Heart right ventricle (tissue), 16 donors: ENCODE measurements at regions of chr12 and their contacts with region 1.

Region 1: DNA sequence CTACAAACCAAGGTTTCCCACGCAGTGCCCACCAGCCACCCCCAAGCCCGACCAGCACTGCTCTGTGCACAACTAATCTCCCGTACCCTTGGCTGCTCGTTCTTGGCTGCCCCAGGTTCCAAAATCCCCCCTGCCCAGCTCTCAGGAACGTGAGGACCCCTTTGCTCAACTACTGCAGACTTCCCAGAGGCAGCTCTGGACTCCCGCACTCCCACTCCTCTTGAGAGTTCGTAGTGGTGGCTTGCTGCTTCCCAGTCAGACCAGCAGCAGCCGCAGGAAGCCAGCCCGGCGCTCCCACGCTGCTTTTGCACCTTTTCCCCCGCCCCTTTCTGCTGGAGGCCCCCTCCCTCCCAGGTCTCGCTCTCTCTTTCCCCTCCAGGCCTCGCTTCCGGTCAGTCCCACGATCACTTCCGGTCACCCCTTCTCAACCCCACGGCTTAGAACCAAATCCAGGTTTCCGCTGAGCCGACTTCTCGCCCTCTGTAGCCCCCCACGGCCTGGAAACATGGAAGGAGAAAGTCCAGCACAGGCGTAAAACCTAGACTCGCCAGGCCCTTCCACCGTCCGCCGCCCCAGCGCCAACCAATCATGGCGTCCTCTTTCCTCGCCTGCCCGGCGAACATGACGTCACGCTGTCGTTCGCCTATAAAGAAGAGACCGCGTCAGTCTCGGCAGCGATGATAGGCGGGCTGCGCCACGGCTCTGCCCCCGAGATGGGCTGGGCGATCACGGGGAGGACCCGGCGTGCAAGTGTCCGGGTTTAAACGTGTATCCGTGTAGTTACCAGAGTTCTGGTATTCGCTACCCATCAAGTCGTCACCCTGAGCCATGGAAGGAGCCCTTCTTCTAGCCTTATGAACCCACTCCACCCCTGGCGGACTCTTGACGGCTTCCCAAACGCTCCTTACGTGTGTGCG is at the start of gene TFCP2:
- DNase-seq: peak; percentile 96 to 97
- ATAC-seq: peak; percentile 98 to 100 (median 99)
- H3K4me3 ChIP-seq: peak within 1 kb of the TSS; percentile 64 to 91 (median 76)
- H3K27ac ChIP-seq: peak within 1 kb of the TSS; percentile 89 to 99 (median 96)
- H3K4me1 ChIP-seq: peaks cover 3 to 33% (median 25%) of the 10 kb centered on the region in 9 donors
- H3K27me3 ChIP-seq: no peaks in the 10 kb centered on the region
- CTCF ChIP-seq: peak in 1 of 9 donors; percentile 4
- total RNA-seq, gene TFCP2: 19.3 to 30.9 (median 25.5) TPM

Region 2: GRCh38 chr12:51090705-51091229 is 82.0 kb before region 1 on chr12:
- intact Hi-C with region 1: loop called in 1 of 10 experiments (anchors 5 kb)
- DNase-seq: no peak
- ATAC-seq: no peak
- H3K4me3 ChIP-seq: no peak overlapping the region
- H3K27ac ChIP-seq: no peak overlapping the region
- H3K4me1 ChIP-seq: peaks cover 0 to 3% (median 0%) of the 10 kb centered on the region in 9 donors
- H3K27me3 ChIP-seq: no peaks in the 10 kb centered on the region
- CTCF ChIP-seq: no peak

Region 3: DNA sequence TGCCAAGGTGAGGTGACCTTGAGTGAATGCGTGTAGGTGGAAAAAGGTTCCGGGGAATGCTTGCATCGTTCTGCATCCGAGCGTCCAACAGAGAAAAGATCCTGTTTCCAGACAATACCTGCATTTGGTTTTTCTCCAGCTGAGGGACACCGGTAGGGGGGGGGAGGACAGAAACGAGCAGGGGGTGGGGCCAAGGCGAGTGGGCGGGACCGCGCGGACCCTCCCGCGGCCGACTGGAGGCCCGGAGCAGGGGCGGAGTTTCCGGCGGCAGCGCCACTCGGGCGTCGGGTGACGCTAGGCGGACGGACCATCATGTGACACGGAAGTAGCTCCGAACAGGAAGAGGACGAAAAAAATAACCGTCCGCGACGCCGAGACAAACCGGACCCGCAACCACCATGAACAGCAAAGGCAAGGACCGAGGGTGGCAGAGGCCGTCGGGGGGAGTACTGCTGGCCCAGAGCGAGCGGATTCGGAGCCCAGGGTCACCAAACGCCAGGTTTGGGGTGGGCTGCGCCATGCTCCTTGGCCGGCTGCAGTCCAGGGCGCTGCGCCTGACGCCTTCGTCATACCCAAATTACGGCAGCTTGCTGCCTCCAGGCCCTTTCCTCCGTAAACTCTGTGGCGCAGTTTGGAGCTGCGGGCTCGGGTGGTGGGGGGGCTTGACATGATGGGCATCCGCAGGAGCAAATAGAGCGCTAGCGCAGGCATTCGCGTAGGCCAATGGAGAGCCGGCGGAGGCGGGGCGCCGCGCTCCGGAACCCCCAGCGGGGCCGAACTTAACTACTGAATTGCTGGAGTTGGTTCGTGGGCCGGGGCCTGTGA is 65.9 kb after region 1 on chr12 and contains the start of gene DAZAP2:
- intact Hi-C with region 1: loop called in 3 of 10 experiments (anchors 2 kb)
- DNase-seq: peak; percentile 96 to 97
- ATAC-seq: peak; percentile 98 to 99 (median 99)
- H3K4me3 ChIP-seq: peak within 1 kb of the TSS; percentile 68 to 100 (median 92)
- H3K27ac ChIP-seq: peak within 1 kb of the TSS; percentile 96 to 100 (median 100)
- H3K4me1 ChIP-seq: peaks cover 8 to 47% (median 21%) of the 10 kb centered on the region in 9 donors
- H3K27me3 ChIP-seq: no peaks in the 10 kb centered on the region
- CTCF ChIP-seq: peak in 6 of 9 donors; percentile 6 to 54 (median 37)
- total RNA-seq, gene DAZAP2: 140 to 185 (median 165) TPM